Naive thymus-derived CD4-positive, alpha-beta T cell (primary cell): ENCODE measurements at regions of chr1 and their contacts with region 1.

Region 1: GRCh38 chr1:117367047-117368018 is at the start of gene MAN1A2:
- DNase-seq: peak in 7 of 9 donors; percentile 59 to 79 (median 75)
- ATAC-seq: peak; percentile 78
- H3K4me3 ChIP-seq: peak within 1 kb of the TSS; percentile 83
- H3K4me3 Mint-ChIP-seq: peak within 1 kb of the TSS; percentile 92 to 98 (median 95)
- H3K27ac ChIP-seq: peak within 1 kb of the TSS; percentile 91
- H3K27ac Mint-ChIP-seq: peak within 1 kb of the TSS; percentile 92 to 99 (median 97)
- H3K4me1 ChIP-seq: peaks cover 23 to 44% of the 10 kb centered on the region in 2 donors
- H3K4me1 Mint-ChIP-seq: peaks cover 46 to 82% (median 73%) of the 10 kb centered on the region in 7 donors
- H3K27me3 ChIP-seq: no peaks in the 10 kb centered on the region
- H3K27me3 Mint-ChIP-seq: no peaks in the 10 kb centered on the region
- total RNA-seq, gene MAN1A2: 40.4 to 63.4 (median 47.1) TPM

Region 2: GRCh38 chr1:117121776-117122697 is 245.3 kb before region 1 on chr1:
- CTCF ChIA-PET with region 1: no interaction called
- POLR2A ChIA-PET with region 1: no interaction called
- intact Hi-C with region 1: loop called in 1 of 2 experiments (anchors 2 kb)
- DNase-seq: peak; percentile 64 to 81 (median 74)
- ATAC-seq: peak; percentile 90
- H3K4me3 ChIP-seq: peak overlapping the region; percentile 97
- H3K4me3 Mint-ChIP-seq: peak overlapping the region; percentile 83 to 90 (median 87)
- H3K27ac ChIP-seq: peak overlapping the region; percentile 61
- H3K27ac Mint-ChIP-seq: peak overlapping the region in 2 of 9 donors; percentile 16 to 53
- H3K4me1 ChIP-seq: peaks cover 0 to 4% of the 10 kb centered on the region in 2 donors
- H3K4me1 Mint-ChIP-seq: peaks cover 0 to 13% (median 4%) of the 10 kb centered on the region in 7 donors
- H3K27me3 ChIP-seq: no peaks in the 10 kb centered on the region
- H3K27me3 Mint-ChIP-seq: peaks cover 5 to 21% (median 6%) of the 10 kb centered on the region in 5 donors

Region 3: DNA sequence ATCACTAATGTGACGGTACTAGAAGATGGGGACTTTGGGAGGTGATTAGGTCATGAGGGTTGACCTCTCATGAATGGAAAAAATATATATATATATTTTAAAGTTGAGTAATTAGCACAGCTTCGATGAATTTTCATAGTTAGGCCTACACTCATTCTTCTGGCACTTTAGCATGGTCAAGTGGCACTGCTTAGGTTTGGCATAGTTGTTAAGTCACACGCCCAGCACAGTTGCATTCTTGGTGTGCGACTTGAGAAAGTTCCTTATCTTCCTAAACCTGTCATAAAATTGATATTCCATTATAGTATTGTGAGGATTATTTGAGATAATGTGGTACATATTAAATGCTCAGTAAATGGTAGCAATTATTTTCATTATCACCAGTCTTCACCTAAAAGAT is 47.6 kb after region 1 on chr1:
- CTCF ChIA-PET with region 1: no interaction called
- POLR2A ChIA-PET with region 1: interaction called, 3 read pairs
- intact Hi-C with region 1: loop called in 1 of 2 experiments (anchors 5 kb)
- DNase-seq: no peak
- ATAC-seq: no peak
- H3K4me3 ChIP-seq: no peak overlapping the region
- H3K4me3 Mint-ChIP-seq: no peak overlapping the region
- H3K27ac ChIP-seq: no peak overlapping the region
- H3K27ac Mint-ChIP-seq: no peak overlapping the region
- H3K4me1 ChIP-seq: no peaks in the 10 kb centered on the region
- H3K4me1 Mint-ChIP-seq: peaks cover 2 to 57% (median 21%) of the 10 kb centered on the region in 7 donors
- H3K27me3 ChIP-seq: no peaks in the 10 kb centered on the region
- H3K27me3 Mint-ChIP-seq: no peaks in the 10 kb centered on the region

Region 4: DNA sequence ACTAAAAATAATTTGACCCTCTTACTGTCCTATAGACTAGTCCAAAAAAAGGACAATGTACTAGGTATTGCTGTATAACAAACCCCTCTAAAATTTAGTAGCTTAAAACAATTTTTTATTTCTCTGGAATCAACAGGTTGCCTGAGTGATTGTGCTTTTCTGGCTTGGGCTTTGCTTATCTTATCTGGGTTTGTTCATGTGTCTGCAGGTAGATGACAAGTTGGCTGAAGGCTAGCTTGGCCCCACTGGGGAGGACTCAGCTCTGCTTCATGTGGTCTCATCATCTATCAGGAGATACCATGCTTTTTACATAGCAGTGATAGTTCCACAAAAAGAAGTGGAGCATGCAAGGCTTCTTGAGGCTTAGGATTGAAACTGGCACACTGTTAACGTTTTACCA is 114.1 kb after region 1 on chr1:
- CTCF ChIA-PET with region 1: no interaction called
- POLR2A ChIA-PET with region 1: no interaction called
- intact Hi-C with region 1: no loop called
- DNase-seq: no peak
- ATAC-seq: no peak
- H3K4me3 ChIP-seq: no peak overlapping the region
- H3K4me3 Mint-ChIP-seq: no peak overlapping the region
- H3K27ac ChIP-seq: no peak overlapping the region
- H3K27ac Mint-ChIP-seq: no peak overlapping the region
- H3K4me1 ChIP-seq: no peaks in the 10 kb centered on the region
- H3K4me1 Mint-ChIP-seq: peaks cover 0 to 2% (median 0%) of the 10 kb centered on the region in 7 donors
- H3K27me3 ChIP-seq: no peaks in the 10 kb centered on the region
- H3K27me3 Mint-ChIP-seq: no peaks in the 10 kb centered on the region

Region 5: DNA sequence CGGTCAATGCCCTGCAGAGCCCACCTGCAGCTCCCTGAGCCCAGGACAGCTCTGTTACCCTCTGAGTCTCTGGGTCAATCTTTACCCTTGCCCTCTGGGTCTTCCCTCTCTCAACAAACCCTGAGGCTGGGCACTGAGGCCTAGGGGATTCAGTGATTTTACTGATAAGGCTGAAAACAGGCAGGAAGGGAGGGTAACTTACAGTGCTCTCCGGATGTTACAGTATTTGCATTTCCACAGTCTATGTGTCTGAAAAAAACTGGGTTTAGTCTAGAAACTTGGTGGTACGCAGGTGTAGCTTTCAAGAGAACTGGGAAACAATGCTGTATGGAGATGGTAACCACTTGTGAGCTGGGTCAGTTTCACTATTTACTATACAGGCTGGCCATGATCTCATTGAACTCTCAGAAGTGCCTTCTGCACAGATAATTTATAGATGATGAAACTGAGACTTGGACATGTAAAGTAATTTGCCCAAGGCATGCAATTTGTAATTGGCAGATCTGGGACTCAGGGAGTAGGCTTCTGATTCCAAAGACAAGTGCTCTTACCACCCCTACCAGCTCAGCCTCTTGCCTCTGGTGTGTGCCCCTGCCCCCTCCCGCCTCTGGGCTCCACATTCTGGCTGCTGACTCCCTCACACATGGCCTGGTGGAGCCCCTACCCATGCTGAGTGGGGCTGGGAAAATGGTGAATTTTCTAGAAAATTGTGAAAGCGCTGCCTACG is 287.3 kb after region 1 on chr1:
- CTCF ChIA-PET with region 1: no interaction called
- POLR2A ChIA-PET with region 1: interaction called, 5 read pairs
- intact Hi-C with region 1: loop called in 1 of 2 experiments (anchors 5 kb)
- DNase-seq: peak in 3 of 9 donors; percentile 31 to 47 (median 37)
- ATAC-seq: no peak
- H3K4me3 ChIP-seq: peak overlapping the region; percentile 2
- H3K4me3 Mint-ChIP-seq: peak overlapping the region; percentile 58 to 81 (median 70)
- H3K27ac ChIP-seq: no peak overlapping the region
- H3K27ac Mint-ChIP-seq: peak overlapping the region in 7 of 9 donors; percentile 33 to 93 (median 84)
- H3K4me1 ChIP-seq: peaks cover 65 to 92% of the 10 kb centered on the region in 2 donors
- H3K4me1 Mint-ChIP-seq: peaks cover 68 to 83% (median 78%) of the 10 kb centered on the region in 7 donors
- H3K27me3 ChIP-seq: no peaks in the 10 kb centered on the region
- H3K27me3 Mint-ChIP-seq: peaks cover 0 to 45% (median 14%) of the 10 kb centered on the region in 5 donors

Region 6: GRCh38 chr1:117929173-117929989 is 562.0 kb after region 1 on chr1 and contains the starts of genes GDAP2 and WDR3:
- CTCF ChIA-PET with region 1: no interaction called
- POLR2A ChIA-PET with region 1: no interaction called
- intact Hi-C with region 1: loop called (anchors 1 to 2 kb)
- DNase-seq: peak; percentile 84 to 98 (median 94)
- ATAC-seq: peak; percentile 96
- H3K4me3 ChIP-seq: peak within 1 kb of the TSS; percentile 94
- H3K4me3 Mint-ChIP-seq: peak within 1 kb of the TSS; percentile 90 to 97 (median 94)
- H3K27ac ChIP-seq: peak within 1 kb of the TSS; percentile 89
- H3K27ac Mint-ChIP-seq: peak within 1 kb of the TSS; percentile 74 to 97 (median 94)
- H3K4me1 ChIP-seq: peaks cover 24 to 30% of the 10 kb centered on the region in 2 donors
- H3K4me1 Mint-ChIP-seq: peaks cover 41 to 79% (median 71%) of the 10 kb centered on the region in 7 donors
- H3K27me3 ChIP-seq: no peaks in the 10 kb centered on the region
- H3K27me3 Mint-ChIP-seq: peaks cover 0 to 2% (median 0%) of the 10 kb centered on the region in 5 donors
- total RNA-seq, gene GDAP2: 22.3 to 31.2 (median 25.2) TPM
- total RNA-seq, gene WDR3: 12.2 to 34.6 (median 30.0) TPM